Ovary (tissue), 10 donors: ENCODE measurements at regions of chr2 and their contacts with region 1.

Region 1: GRCh38 chr2:217804786-217805667 is 197.8 kb downstream of the TNS1 start:
- DNase-seq: peak in 1 of 5 donors; percentile 18
- H3K4me3 ChIP-seq: no peak overlapping the region
- H3K27ac ChIP-seq: peak overlapping the region in 1 of 2 donors; percentile 38
- H3K4me1 ChIP-seq: peaks cover 50% of the 10 kb centered on the region
- H3K27me3 ChIP-seq: no peaks in the 10 kb centered on the region
- CTCF ChIP-seq: no peak
- EP300 ChIP-seq: no peak
- POLR2A ChIP-seq: no peak

Region 2: DNA sequence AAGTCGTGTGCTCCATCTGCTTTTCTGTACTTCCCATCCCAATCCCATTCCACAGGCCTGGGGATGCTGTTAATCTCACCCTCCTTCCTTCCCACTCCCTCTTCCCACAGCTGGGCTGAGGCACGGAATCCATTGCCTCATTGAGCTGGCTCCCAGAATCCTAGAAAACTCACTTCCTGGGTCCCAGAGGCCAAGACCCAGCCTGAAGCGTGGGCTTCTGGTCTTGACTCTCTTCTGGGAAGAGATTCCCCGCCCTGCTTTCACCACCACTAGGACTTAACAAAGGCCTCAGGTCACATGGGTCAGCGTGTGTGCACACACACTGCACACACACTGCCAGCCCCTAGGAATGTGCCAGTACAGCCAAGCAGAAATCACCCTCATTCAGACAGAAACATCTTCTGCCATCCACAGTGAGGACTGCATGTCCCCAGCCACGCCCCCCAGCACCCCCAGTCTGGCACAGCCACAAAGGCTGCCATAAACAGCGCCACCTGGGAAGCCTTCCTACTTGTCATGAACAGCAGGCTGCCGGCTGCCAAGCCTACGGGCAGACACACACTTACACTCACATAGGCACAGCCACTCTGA is 32.0 kb after region 1 on chr2:
- intact Hi-C with region 1: loop called in 1 of 4 experiments (anchors 5 kb)
- DNase-seq: peak in 3 of 5 donors; percentile 35 to 66 (median 62)
- H3K4me3 ChIP-seq: no peak overlapping the region
- H3K27ac ChIP-seq: peak overlapping the region in 1 of 2 donors; percentile 8
- H3K4me1 ChIP-seq: peaks cover 23% of the 10 kb centered on the region
- H3K27me3 ChIP-seq: no peaks in the 10 kb centered on the region
- CTCF ChIP-seq: no peak
- EP300 ChIP-seq: no peak
- POLR2A ChIP-seq: no peak

Region 3: GRCh38 chr2:217858519-217859491 is 53.8 kb after region 1 on chr2:
- intact Hi-C with region 1: loop called in 1 of 4 experiments (anchors 10 kb)
- DNase-seq: peak; percentile 84 to 89 (median 85)
- H3K4me3 ChIP-seq: peak overlapping the region; percentile 2
- H3K27ac ChIP-seq: peak overlapping the region in 1 of 2 donors; percentile 64
- H3K4me1 ChIP-seq: peaks cover 20% of the 10 kb centered on the region
- H3K27me3 ChIP-seq: no peaks in the 10 kb centered on the region
- CTCF ChIP-seq: no peak
- EP300 ChIP-seq: no peak
- POLR2A ChIP-seq: no peak

Region 4: GRCh38 chr2:217886720-217887309 is 81.8 kb after region 1 on chr2:
- intact Hi-C with region 1: loop called in 2 of 4 experiments (anchors 5 kb)
- DNase-seq: peak; percentile 68 to 84 (median 81)
- H3K4me3 ChIP-seq: no peak overlapping the region
- H3K27ac ChIP-seq: no peak overlapping the region
- H3K4me1 ChIP-seq: peaks cover 4% of the 10 kb centered on the region
- H3K27me3 ChIP-seq: no peaks in the 10 kb centered on the region
- CTCF ChIP-seq: peak; percentile 70 to 79 (median 75)
- EP300 ChIP-seq: no peak
- POLR2A ChIP-seq: no peak

Region 5: GRCh38 chr2:218523651-218524050 is 718.6 kb after region 1 on chr2:
- intact Hi-C with region 1: no loop called
- DNase-seq: no peak
- H3K4me3 ChIP-seq: no peak overlapping the region
- H3K27ac ChIP-seq: no peak overlapping the region
- H3K4me1 ChIP-seq: no peaks in the 10 kb centered on the region
- H3K27me3 ChIP-seq: no peaks in the 10 kb centered on the region
- CTCF ChIP-seq: no peak
- EP300 ChIP-seq: no peak
- POLR2A ChIP-seq: no peak